Posterior cingulate gyrus (tissue), 11 donors: ENCODE measurements at regions of chr10 and their contacts with region 1.

Region 1: DNA sequence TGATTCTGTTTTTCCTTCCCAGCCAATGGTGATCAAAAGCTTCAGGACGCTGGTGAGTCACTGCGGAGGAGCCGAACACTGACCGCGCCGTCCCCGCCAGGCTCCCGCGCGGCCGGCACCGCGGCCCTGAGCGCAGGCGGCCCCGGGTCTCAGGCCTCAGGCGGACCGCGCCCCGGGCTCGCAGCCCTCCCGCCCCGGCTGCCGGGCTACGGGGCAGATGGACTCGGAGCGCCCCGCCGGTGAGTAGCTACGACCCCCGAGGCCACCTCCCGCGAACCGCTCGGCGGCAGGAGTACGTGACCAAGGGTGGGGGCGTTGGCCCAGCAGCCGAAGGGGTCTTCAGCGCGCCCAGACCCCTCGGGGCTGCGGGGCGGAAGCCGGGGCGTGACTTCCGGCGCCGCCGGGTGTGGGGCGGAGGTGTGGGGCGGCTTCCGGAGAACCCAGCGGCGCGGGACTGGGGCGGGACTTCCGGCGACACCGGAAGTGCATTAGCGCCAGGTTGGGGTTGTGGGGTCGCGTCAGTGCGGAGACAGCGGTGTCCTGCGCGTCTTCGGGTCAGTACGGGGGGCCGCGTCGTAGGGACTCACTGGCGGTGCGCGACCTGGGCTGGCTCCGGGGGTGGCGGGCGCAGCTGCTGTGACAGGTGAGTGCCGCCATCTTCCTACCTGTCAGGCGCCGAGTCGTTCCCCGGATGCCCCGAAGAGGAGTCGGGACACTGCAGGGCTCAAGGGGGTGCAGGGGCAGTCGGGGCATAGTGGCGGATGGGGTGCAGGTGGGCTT is at the start of gene WDR37:
- DNase-seq: peak; percentile 85 to 98 (median 88)

Region 2: DNA sequence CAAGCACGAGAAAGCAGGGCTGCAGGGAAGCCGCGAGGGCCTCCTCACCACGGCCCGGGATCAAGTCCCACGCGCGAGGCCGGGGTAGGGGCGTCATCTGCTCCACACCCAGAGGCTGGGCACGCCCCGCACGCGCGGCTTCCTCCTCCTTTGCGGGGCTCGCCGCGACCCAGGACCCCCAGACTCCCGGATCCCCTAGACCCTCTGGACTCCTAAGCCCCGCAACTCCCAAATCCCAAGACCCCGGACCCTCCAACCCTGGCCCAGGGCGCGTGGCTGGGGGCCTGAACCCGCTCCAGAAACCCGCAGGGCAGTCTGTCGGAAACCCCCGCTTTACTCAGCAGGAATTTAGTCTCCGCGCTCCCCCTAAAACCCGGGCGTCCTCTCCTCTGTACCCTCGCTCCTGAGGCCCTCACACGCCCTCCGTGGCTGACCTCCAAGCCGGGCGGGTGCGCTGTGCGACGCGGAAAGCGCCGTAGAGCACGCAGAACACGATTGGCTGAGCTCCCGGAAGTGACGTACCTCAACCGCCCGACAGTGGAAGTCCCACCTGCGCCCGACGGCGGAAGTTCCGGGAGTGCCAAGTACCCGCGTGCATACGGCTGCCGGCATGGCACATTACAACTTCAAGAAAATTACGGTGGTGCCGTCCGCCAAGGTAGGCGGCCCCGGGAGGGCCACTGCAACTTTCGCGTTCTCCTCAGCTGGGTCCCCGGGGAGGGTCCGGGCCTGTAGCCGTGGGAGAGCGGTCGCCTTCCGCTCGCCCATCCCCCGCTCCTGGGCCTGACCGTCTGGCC is 68.4 kb before region 1 on chr10 and contains the start of gene GTPBP4:
- intact Hi-C with region 1: loop called (anchors 2 kb)
- DNase-seq: peak; percentile 95 to 100 (median 98)